A673 (cell line): ENCODE measurements at regions of chr10 and their contacts with region 1.

Region 1: DNA sequence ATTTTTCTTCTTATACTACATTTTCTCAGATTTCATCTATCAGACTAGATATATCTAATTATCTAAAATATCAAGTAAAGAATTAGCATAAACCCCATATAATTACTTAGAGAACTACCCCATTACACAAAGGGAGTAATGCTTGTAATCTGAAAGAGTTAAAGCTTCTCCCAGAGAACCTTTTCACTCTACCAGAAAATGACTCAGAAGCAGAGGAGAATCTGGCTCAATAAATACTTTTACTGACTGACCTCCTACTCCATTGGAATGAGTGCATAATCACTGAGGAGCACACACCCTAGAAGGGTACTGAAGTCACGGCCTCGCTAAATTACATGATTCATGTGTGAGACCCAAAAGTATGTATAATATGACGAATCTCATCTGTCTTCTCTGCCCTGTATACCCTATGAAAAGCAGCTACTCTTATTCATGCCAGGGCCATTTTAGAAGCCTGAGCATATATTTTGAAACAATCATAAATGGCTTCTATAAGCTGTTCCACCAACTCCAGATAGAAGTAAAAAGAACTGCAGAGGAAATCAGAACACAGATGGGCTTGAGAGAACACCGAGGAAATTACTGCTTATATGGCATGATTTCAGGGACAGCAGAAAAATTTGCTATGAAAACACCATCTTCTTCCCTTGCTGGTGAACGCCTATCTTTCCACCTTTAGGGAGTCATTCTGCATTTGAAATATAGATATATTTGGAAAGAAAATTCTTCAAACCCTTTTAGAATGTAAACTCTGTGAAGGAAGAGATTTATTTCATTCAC is 32.7 kb downstream of the DNMBP start:
- DNase-seq: peak; percentile 67
- H3K4me3 ChIP-seq: no peak overlapping the region
- H3K27ac ChIP-seq: peak overlapping the region; percentile 84
- H3K4me1 ChIP-seq: peaks cover 58% of the 10 kb centered on the region
- H3K27me3 ChIP-seq: no peaks in the 10 kb centered on the region
- CTCF ChIP-seq: no peak

Region 2: DNA sequence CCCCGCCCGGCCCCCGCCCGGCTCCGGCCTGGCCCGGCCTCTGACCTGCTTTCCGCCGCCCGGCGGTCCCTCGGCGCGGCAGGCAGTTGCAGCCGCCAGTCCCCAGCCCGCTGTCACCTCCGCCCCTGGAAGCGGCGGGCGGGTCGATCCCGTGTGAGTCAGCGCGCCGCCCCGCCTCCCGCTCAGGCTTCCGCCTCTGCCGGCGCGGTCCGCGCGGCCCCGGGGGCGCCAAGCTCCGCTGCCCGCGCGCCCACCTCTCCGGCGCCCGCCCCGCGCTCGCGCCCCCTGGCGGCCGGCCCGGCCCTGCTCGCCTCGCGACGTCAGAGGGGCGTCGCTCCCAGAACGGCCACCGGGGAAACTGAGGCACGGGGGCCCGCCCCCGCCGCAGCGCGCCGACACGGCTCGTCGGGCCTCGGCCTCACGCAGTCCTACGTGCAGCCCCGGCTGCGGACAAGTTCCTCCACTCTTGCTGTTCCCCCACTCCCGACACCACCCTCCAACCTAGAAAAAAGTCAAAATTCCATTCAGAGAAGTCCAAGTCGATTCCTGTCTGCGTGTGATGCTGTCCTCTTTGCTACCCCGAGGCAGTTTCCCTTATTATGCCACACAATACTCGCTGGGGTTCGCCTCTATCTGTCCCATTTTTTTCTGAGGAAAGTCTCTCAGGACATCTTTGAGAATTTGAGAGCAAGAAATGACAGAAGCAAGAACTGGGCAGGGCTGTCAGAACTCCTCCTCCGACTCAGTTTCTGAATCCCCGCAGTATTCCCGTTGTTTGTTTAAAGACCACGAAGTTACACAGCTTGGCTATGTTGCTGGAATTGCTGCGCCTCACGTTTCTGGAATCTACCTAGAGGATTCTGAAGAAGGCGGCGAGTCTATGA is 33.0 kb after region 1 on chr10 and contains the start of gene DNMBP:
- CTCF ChIA-PET with region 1: interaction called, 3 read pairs
- POLR2A ChIA-PET with region 1: no interaction called
- intact Hi-C with region 1: loop called (anchors 2 kb)
- DNase-seq: peak; percentile 92
- H3K4me3 ChIP-seq: peak within 1 kb of the TSS; percentile 61
- H3K27ac ChIP-seq: peak within 1 kb of the TSS; percentile 53
- H3K4me1 ChIP-seq: peaks cover 29% of the 10 kb centered on the region
- H3K27me3 ChIP-seq: no peaks in the 10 kb centered on the region
- CTCF ChIP-seq: peak; percentile 54
- total RNA-seq, gene DNMBP: 23.6 and 28.0 TPM in 2 replicates

Region 3: DNA sequence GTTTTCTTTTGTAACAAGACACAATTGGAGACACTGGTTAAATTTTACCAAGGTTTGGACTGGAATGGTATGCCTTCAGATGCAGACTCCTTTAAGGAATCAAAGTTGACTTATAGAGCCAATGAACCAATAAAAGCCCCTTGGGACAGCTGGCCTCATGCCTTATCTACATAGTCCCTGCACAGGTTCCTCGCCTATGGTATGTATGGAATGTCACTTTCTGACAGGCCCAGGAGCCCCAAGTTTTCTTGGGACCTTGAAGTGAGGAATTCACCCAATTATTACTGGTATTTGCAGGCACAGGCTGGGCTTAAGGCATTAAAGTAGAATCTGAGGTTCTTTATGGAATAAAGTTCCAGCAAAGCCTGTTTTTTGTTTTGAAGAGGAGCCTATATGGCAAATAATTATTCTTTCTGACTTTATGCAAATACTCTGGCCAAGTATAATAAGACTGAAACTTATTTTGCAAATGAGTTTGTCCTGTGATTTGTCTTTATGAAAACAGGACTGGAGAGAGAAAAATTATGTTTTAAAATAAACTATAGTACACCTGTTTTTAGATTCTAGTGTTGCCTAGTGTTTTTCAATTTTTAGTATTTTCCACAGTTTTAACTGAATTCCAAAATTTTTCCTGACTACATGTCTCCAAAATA is 56.8 kb after region 1 on chr10:
- CTCF ChIA-PET with region 1: no interaction called
- POLR2A ChIA-PET with region 1: no interaction called
- intact Hi-C with region 1: no loop called
- DNase-seq: peak; percentile 12
- H3K4me3 ChIP-seq: no peak overlapping the region
- H3K27ac ChIP-seq: no peak overlapping the region
- H3K4me1 ChIP-seq: peaks cover 3% of the 10 kb centered on the region
- H3K27me3 ChIP-seq: no peaks in the 10 kb centered on the region
- CTCF ChIP-seq: no peak

Region 4: DNA sequence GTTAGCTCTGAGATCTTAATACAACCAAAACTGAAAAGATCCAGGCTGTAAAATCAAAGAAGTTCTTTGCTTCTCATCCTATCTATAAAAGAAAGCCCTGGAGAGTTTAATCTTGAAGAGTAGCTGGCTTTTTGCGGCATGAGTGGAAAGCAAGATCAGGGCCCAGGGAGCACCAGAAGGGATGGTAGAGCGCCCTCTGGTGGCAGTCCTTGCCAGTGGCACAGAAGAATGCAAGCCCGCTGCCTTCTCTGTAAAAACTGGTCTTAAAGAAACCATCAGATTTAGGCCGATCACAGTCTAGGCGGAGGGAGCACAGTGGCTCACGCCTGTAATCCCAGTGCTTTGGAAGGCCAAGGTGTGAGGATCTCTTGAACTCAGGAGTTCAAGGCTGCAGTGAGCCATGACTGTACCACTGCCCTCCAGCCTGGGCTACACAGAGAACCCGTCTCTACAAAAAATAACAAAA is 69.0 kb after region 1 on chr10:
- CTCF ChIA-PET with region 1: interaction called, 3 read pairs
- POLR2A ChIA-PET with region 1: no interaction called
- intact Hi-C with region 1: loop called (anchors 5 kb)
- DNase-seq: peak; percentile 92
- H3K4me3 ChIP-seq: no peak overlapping the region
- H3K27ac ChIP-seq: no peak overlapping the region
- H3K4me1 ChIP-seq: peaks cover 27% of the 10 kb centered on the region
- H3K27me3 ChIP-seq: no peaks in the 10 kb centered on the region
- CTCF ChIP-seq: peak; percentile 94

Region 5: DNA sequence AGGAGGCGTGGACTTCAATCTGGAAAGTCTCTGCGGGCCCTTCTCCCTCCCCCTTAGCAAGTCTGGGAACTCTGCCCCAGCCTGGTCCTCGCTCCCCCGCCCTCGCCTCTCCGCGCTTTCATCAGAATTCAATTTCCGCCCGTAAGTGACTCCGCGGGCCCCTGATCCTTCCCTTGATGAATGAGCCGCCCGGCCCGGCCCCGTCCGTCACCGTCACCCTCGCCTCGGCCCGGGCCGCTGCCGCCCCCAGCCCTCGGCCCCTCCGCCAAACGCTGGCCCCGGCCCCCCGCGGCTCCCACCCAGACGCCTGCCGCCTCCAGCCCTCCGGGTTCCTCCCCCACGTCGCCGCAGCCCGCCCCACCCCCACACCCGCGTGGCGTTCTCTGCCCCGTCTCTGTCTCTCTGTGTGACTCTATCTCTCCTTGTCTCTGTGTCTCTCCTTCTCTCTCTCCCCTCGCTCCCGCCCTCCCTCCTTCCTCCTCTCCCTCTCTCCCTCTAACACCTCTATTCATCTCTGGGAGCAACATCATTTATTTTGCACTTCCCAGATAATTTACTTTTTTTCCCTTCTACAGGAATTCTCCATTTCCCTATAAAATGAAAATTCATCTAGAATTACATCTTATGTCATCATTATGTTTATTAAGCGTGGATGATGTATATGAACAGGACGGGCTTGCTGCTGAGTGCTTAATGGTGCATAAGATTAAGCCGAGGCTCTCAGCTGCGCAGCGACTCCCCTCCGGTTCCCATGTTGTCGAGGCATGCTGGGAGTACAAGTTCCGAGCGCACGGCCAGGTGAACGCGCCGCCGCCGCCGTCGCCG is 677.1 kb after region 1 on chr10:
- CTCF ChIA-PET with region 1: no interaction called
- POLR2A ChIA-PET with region 1: no interaction called
- intact Hi-C with region 1: no loop called
- DNase-seq: peak; percentile 71
- H3K4me3 ChIP-seq: peak overlapping the region; percentile 47
- H3K27ac ChIP-seq: peak overlapping the region; percentile 50
- H3K4me1 ChIP-seq: peaks cover 23% of the 10 kb centered on the region
- H3K27me3 ChIP-seq: peaks cover 63% of the 10 kb centered on the region
- CTCF ChIP-seq: no peak